ENCODE measurements at regions of chr16 and their contacts with region 1.

Region 1: GRCh38 chr16:71883849-71884638 is at the start of gene ZNF821:
- DNase-seq: peak; percentile 79
- ATAC-seq: peak; percentile 67
- H3K4me3 Mint-ChIP-seq: peak within 1 kb of the TSS; percentile 89
- H3K27ac Mint-ChIP-seq: peak within 1 kb of the TSS; percentile 92
- H3K4me1 Mint-ChIP-seq: peaks cover 41% of the 10 kb centered on the region
- H3K27me3 Mint-ChIP-seq: peaks cover 10% of the 10 kb centered on the region
- total RNA-seq, gene ZNF821: 9.0 to 10.7 TPM

Region 2: GRCh38 chr16:71564155-71564967 is 319.7 kb before region 1 on chr16:
- CTCF ChIA-PET with region 1: interaction called, 17 read pairs
- DNase-seq: no peak
- ATAC-seq: no peak
- H3K4me3 Mint-ChIP-seq: peak overlapping the region; percentile 79
- H3K27ac Mint-ChIP-seq: peak overlapping the region; percentile 93
- H3K4me1 Mint-ChIP-seq: peaks cover 18% of the 10 kb centered on the region
- H3K27me3 Mint-ChIP-seq: peaks cover 10% of the 10 kb centered on the region

Region 3: GRCh38 chr16:71754652-71755051 is 129.4 kb before region 1 on chr16:
- CTCF ChIA-PET with region 1: no interaction called
- DNase-seq: no peak
- ATAC-seq: no peak
- H3K4me3 Mint-ChIP-seq: no peak overlapping the region
- H3K27ac Mint-ChIP-seq: peak overlapping the region; percentile 35
- H3K4me1 Mint-ChIP-seq: peaks cover 2% of the 10 kb centered on the region
- H3K27me3 Mint-ChIP-seq: no peaks in the 10 kb centered on the region

Region 4: DNA sequence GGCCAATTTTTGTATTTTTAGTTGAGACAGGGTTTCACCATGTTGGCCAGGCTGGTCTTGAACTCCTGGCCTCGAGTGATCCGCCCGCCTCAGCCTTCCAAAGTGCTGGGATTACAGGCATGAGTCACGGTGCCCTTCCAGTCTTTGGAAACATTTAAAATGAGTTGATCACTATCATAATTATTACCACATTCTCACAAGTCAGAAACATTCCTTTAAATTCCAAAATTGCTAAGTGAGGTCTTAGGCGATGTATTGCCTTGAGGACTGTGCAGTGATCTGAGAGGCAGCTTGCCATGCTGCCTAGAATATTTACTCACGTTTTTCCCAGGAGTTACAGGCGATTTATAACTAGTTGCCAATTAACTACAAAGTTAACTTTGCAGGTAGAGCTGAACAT is 44.0 kb before region 1 on chr16:
- CTCF ChIA-PET with region 1: interaction called, 29 read pairs
- DNase-seq: no peak
- ATAC-seq: no peak
- H3K4me3 Mint-ChIP-seq: no peak overlapping the region
- H3K27ac Mint-ChIP-seq: no peak overlapping the region
- H3K4me1 Mint-ChIP-seq: peaks cover 24% of the 10 kb centered on the region
- H3K27me3 Mint-ChIP-seq: no peaks in the 10 kb centered on the region

Region 5: DNA sequence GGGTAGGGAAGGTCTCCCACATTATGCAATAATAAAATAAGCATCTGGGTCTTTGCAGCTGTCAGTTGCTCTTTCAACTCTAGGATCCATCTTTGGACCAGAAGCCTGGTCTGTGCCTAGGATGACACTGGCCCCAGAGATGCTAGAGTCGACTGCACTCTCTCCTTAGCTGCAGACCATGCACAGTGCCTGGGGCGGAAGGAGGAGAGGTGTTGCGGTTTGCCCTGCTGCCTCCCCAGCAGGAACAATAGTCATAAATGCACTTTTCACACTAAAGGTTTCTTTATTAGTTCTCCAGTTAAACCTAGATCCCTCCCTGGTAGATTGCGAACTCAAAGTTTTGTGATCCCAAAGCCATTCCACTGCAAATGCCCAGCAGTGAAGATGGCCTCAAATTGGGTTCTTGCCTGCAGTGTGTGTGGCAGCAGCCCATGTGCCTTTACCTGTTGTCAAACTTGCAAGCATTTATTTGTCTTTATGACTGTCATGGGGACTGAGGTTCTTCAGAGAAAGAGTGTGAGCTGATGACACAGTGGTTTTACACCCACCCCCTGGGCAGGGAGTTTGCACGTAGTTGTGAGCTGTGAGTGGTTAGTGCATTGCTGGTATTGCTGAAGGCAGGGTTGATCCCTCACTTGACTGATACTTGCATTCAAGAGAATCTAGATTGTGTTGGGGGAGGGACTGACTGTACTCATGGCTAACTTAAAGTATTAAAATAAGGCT is 27.9 kb before region 1 on chr16:
- CTCF ChIA-PET with region 1: interaction called, 40 read pairs
- DNase-seq: peak; percentile 80
- ATAC-seq: peak; percentile 87
- H3K4me3 Mint-ChIP-seq: peak overlapping the region; percentile 37
- H3K27ac Mint-ChIP-seq: peak overlapping the region; percentile 86
- H3K4me1 Mint-ChIP-seq: peaks cover 67% of the 10 kb centered on the region
- H3K27me3 Mint-ChIP-seq: no peaks in the 10 kb centered on the region

Region 6: DNA sequence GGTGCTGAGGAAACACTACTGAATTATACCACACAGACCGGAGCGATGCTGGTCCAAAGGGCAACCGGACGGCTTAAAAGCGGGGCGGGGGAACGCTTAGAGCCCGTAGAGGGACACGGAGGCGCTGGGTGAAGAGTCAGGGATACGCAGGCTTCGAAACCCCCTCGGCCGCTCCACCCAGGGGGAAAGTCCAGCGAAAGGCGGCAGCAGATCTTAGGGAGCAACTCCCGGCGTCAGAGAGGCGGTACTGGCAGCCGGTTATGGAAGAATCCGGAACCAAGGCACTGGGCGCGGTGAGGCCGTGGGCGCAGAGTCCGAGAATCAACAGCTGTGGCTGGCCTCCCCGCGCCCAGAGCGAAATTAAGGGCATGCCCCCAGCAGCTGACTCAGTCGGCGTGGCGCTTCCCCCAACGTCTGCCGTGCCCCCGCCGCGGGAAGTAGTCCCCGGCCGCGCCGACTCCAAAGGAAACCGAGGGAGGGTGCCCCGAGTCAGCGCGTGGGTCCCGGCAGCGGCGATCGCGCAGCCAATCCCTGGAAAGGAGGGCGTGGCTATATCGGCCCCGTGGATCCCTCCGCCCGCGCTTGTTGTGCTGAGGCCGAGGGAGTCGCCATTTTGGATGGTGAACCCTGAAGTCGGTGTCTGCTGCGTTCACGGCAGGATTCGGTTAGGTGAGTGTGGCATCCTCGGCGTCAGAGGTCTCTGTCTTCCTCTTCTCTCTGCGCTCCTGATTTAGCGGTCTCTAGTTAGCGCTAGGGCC is 11.1 kb after region 1 on chr16 and contains the start of gene IST1:
- CTCF ChIA-PET with region 1: interaction called, 92 read pairs
- DNase-seq: peak; percentile 99
- ATAC-seq: peak; percentile 95
- H3K4me3 Mint-ChIP-seq: peak within 1 kb of the TSS; percentile 98
- H3K27ac Mint-ChIP-seq: peak within 1 kb of the TSS; percentile 97
- H3K4me1 Mint-ChIP-seq: peaks cover 30% of the 10 kb centered on the region
- H3K27me3 Mint-ChIP-seq: no peaks in the 10 kb centered on the region
- total RNA-seq, gene IST1: 206 to 209 TPM

Region 7: DNA sequence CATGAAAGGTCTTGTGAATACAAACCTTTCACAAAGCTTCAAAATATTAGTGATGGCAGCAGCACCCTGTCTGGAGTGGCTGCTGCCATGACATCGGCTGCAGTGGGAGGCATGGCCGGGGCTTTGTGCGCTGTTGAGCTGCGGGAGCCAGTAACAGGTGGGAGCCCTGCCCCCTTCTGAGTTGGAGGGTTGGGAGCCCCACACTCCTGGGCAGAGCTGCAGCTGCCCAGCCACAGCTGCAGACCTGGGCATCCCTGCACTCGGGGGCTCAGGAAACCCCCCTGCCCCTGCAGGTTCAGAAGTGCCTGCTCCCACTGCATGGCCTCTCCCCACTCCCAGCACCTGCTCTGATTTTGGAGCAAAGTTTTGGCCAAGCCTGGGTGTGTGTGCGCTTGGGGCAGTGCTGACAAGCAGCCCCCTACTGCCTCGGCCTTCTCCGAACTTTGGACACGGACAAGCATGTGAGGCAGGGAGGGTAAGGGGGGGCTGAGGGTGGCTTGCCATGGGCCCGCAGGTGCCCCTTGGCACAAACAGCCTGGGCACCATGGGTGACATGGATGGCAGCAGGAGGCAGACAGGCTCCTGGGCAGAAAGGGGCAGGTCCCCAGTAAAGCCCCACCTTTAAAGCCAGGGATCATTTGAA is 53.9 kb after region 1 on chr16:
- CTCF ChIA-PET with region 1: no interaction called
- DNase-seq: no peak
- ATAC-seq: no peak
- H3K4me3 Mint-ChIP-seq: no peak overlapping the region
- H3K27ac Mint-ChIP-seq: no peak overlapping the region
- H3K4me1 Mint-ChIP-seq: no peaks in the 10 kb centered on the region
- H3K27me3 Mint-ChIP-seq: peaks cover 2% of the 10 kb centered on the region